Adrenal gland (tissue), 19 donors: ENCODE measurements at regions of chr5 and their contacts with region 1.

Region 1: DNA sequence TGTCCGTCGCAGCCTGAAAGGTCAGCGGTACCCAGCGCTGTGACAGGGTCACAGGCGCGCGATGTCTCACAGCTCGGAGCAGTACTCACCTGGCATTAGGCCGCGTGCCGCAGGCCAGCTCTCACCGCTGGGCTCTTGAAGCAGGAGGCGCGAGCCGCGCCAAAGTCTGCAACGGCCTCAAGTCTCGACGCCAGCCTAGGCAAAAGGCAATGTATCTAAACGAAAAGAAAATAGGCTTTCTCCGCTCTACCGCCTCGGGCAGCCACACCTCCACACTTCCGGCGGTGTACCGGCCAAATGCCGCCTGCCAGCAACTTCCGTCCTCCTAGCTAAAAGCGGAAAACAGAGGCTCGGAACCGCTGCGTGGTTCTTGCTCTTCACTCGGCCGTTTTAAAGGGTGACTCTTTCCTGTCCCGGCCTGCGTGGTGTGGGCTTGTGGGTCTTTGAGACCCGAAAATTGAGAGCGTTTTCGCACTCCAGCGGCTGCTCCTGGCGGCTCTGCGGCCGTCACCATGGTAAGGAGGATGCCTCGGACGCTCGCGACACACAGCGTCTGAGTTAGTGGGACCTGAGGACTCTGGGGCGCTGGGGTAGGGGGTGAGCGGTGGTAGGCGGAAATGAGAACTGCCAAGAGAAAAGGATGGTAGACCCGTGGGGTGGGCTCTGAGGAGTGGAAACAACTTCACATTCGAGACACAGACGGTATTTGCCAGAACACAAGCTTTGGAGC is at the starts of genes GFM2 and NSA2:
- DNase-seq: peak; percentile 92 to 96 (median 93)
- H3K4me3 ChIP-seq: peak within 1 kb of the TSS; percentile 61 to 86 (median 74)
- H3K27ac ChIP-seq: peak within 1 kb of the TSS; percentile 25 to 80 (median 57)
- H3K4me1 ChIP-seq: peaks cover 9 to 23% of the 10 kb centered on the region in 2 donors
- H3K27me3 ChIP-seq: no peaks in the 10 kb centered on the region
- CTCF ChIP-seq: no peak
- POLR2A ChIP-seq: no peak
- total RNA-seq, gene GFM2: 23.5 to 80.7 (median 35.2) TPM
- total RNA-seq, gene NSA2: 55.9 to 165 (median 80.2) TPM

Region 2: GRCh38 chr5:74595143-74595925 is 171.7 kb before region 1 on chr5:
- intact Hi-C with region 1: no loop called
- DNase-seq: peak in 4 of 7 donors; percentile 4 to 53 (median 23)
- H3K4me3 ChIP-seq: no peak overlapping the region
- H3K27ac ChIP-seq: peak overlapping the region in 1 of 5 donors; percentile 5
- H3K4me1 ChIP-seq: peaks cover 0 to 3% of the 10 kb centered on the region in 2 donors
- H3K27me3 ChIP-seq: no peaks in the 10 kb centered on the region
- CTCF ChIP-seq: no peak
- POLR2A ChIP-seq: no peak

Region 3: GRCh38 chr5:74919487-74919886 is 152.5 kb after region 1 on chr5:
- intact Hi-C with region 1: loop called (anchors 10 kb)
- DNase-seq: peak in 1 of 7 donors; percentile 6
- H3K4me3 ChIP-seq: no peak overlapping the region
- H3K27ac ChIP-seq: no peak overlapping the region
- H3K4me1 ChIP-seq: no peaks in the 10 kb centered on the region
- H3K27me3 ChIP-seq: no peaks in the 10 kb centered on the region
- CTCF ChIP-seq: peak; percentile 34 to 79 (median 64)
- POLR2A ChIP-seq: no peak

Region 4: DNA sequence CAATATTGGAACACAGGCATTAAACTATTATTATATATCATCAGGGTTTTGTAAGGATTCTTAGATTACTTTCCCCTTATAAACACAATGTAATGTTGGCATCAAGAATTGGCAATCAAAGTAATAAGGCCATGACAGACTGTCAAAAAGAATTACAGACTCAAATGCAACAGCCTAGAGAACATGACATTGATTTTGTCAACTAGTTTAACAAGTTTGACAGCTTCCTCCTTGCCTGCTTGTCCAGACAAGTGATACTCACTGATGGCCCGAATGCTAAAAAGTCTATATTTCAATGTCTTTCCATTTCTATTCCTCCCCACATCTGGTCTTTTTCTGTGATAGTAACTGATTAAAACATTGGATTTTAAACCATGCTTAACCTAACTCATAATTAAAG is 476.1 kb after region 1 on chr5:
- intact Hi-C with region 1: no loop called
- DNase-seq: no peak
- H3K4me3 ChIP-seq: no peak overlapping the region
- H3K27ac ChIP-seq: no peak overlapping the region
- H3K4me1 ChIP-seq: no peaks in the 10 kb centered on the region
- H3K27me3 ChIP-seq: no peaks in the 10 kb centered on the region
- CTCF ChIP-seq: no peak
- POLR2A ChIP-seq: no peak